Testis (tissue), 5 donors: ENCODE measurements at regions of chr9 and their contacts with region 1.

Region 1: DNA sequence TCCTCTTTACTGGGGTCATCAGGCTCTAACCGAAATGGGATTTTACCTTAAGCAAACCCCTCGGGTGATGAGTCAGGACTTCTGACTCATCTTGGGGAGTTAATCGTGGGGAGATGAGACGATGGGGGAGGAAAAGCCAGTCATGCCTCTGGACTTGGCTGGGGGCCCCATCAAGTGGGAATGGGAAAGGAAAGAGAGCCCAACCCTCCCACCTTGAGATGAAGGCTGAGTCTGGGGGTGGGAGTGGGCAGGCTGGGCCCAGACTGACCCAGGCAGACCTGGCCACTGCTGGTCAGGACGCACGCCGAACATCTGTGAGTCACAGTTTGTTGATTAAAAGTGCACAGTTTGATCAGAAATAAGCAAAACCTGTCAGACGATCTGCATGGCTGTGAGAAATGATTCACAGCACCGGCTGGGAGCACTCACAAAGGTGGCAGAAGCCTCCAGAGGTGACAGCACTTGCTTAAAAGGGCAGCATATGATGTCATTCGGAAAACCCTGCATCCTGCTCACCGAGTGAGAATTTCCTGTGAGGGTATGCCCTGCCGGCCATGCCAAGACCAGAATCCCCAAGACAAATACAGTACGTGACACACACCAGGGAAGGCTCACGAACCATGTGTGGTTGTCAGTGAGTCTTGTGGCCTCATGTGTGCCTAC is 50.0 kb upstream of the SLC25A51 start:
- DNase-seq: no peak
- H3K4me3 ChIP-seq: no peak overlapping the region
- H3K27ac ChIP-seq: no peak overlapping the region
- H3K4me1 ChIP-seq: peaks cover 7% of the 10 kb centered on the region
- H3K27me3 ChIP-seq: no peaks in the 10 kb centered on the region
- CTCF ChIP-seq: no peak
- POLR2A ChIP-seq: no peak

Region 2: GRCh38 chr9:38047301-38048251 is 93.7 kb after region 1 on chr9:
- intact Hi-C with region 1: loop called (anchors 10 kb)
- DNase-seq: no peak
- H3K4me3 ChIP-seq: no peak overlapping the region
- H3K27ac ChIP-seq: no peak overlapping the region
- H3K4me1 ChIP-seq: no peaks in the 10 kb centered on the region
- H3K27me3 ChIP-seq: no peaks in the 10 kb centered on the region
- CTCF ChIP-seq: no peak
- POLR2A ChIP-seq: no peak

Region 3: GRCh38 chr9:38486056-38486615 is 532.2 kb after region 1 on chr9:
- intact Hi-C with region 1: loop called (anchors 10 kb)
- DNase-seq: peak; percentile 74
- H3K4me3 ChIP-seq: no peak overlapping the region
- H3K27ac ChIP-seq: peak overlapping the region; percentile 32 to 39
- H3K4me1 ChIP-seq: peaks cover 10% of the 10 kb centered on the region
- H3K27me3 ChIP-seq: no peaks in the 10 kb centered on the region
- CTCF ChIP-seq: no peak
- POLR2A ChIP-seq: no peak